ENCODE measurements at regions of chr6 and their contacts with region 1.

Region 1: DNA sequence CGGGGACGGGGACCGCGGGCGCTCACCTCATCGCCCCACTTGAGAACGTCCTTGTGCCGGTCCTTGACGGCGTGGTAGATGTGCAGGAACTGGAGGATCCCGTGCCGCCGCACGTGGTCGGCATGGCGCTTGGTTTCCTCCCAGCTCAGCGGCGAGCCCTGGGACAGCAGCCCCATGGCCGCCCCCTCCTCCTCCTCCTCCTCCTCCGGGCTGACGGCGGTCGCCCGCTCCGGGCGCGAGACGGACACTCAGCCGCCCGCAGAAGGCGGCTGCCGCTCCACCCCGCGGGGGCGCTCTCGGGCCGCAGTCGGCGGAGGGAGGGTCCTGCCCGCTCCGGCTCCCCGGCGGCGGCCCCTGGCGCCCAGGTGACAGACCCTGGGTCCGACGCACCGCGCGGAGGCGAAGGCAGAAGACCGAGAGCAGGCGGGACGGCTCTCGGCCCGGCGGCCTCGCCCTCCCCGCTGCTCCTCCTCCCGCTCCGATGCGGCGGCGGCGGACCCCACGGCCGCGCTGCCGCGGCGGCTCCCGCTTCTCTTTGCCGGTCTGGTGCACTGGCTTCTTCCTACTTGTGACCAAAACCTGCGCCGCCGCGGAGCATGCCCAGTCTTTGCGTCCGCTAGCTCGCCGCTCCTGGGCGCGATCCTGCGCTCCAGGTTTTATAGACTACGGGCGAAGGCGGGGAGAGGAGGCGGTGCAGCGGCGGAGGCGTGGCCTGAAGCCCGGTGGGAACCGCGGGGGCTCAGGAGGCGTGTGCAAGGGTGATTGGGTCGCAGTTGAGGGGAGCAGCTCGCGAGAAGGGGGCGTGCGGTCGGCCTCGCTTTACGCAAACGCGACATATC is at the start of gene GCLC:
- DNase-seq: peak; percentile 97
- ATAC-seq: peak; percentile 80
- total RNA-seq, gene GCLC: 31.9 TPM

Region 2: GRCh38 chr6:53658992-53659391 is 114.3 kb after region 1 on chr6:
- intact Hi-C with region 1: loop called (anchors 5 kb)
- DNase-seq: no peak
- ATAC-seq: no peak